ENCODE measurements at regions of chr17 and their contacts with region 1.

Region 1: DNA sequence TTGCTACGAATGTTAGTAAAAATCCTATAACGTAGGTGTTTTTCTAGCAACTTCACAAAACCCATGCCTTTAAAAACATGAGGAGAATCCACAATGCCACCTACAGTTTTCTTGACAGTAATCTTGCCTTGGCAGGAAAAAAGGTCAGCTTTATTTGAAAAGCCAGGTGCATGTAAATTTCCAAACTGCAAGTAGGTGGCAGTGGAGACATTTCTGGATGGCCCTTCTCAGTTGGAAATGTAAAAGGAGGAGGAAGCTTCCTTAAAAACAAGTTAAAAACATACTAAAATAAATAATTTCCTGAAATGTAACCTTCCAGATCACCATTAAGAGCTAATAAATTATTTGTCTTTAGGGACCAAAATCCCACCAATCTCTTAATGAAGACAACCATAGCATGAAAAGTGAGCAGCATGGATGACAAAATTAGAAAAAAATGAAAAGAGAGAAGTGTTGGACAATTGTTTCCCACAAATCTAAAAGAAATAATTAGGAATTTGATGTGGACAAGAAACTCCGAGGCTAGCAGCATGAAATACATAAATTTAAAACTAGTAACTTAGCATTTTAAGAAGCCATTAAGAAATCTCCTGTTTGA is 152.2 kb downstream of the SNX11 start:
- H3K4me3 ChIP-seq: no peak overlapping the region
- H3K27ac ChIP-seq: no peak overlapping the region
- H3K4me1 ChIP-seq: peaks cover 6% of the 10 kb centered on the region
- CTCF ChIP-seq: peak; percentile 85

Region 2: DNA sequence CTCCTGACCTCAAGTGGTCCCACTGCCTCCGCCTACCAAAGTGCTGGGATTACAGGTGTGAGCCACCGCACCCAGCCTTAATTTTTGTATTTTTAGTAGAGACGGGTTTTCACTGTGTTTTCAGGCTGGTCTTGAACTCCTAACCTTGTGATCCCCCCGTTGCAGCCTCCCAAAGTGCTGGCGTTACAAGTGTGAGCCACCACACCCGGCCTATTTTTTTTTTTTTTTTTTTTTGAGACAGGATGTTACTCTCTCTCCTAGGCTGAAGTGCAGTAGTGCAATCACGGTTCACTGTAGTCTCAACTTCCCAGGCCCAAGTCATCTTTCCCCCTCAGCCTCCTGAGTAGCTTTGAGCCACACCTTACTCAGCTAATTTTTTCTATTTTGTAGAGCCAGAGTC is 155.4 kb before region 1 on chr17:
- CTCF ChIA-PET with region 1: no interaction called
- POLR2A ChIA-PET with region 1: no interaction called
- H3K4me3 ChIP-seq: no peak overlapping the region
- H3K27ac ChIP-seq: no peak overlapping the region
- H3K4me1 ChIP-seq: peaks cover 3% of the 10 kb centered on the region; the same call in 1 of the 2 replicates
- CTCF ChIP-seq: no peak

Region 3: GRCh38 chr17:48181653-48182052 is 78.1 kb before region 1 on chr17:
- CTCF ChIA-PET with region 1: interaction called, 19 read pairs
- POLR2A ChIA-PET with region 1: no interaction called
- H3K4me3 ChIP-seq: no peak overlapping the region
- H3K27ac ChIP-seq: no peak overlapping the region
- H3K4me1 ChIP-seq: no peaks in the 10 kb centered on the region
- CTCF ChIP-seq: peak; percentile 75

Region 4: GRCh38 chr17:48241131-48241591 is 18.6 kb before region 1 on chr17:
- CTCF ChIA-PET with region 1: interaction called, 269 read pairs
- POLR2A ChIA-PET with region 1: interaction called, 3 read pairs
- H3K4me3 ChIP-seq: no peak overlapping the region
- H3K27ac ChIP-seq: peak overlapping the region; percentile 71; the same call in 1 of the 2 replicates
- H3K4me1 ChIP-seq: peaks cover 65% of the 10 kb centered on the region
- CTCF ChIP-seq: no peak

Region 5: DNA sequence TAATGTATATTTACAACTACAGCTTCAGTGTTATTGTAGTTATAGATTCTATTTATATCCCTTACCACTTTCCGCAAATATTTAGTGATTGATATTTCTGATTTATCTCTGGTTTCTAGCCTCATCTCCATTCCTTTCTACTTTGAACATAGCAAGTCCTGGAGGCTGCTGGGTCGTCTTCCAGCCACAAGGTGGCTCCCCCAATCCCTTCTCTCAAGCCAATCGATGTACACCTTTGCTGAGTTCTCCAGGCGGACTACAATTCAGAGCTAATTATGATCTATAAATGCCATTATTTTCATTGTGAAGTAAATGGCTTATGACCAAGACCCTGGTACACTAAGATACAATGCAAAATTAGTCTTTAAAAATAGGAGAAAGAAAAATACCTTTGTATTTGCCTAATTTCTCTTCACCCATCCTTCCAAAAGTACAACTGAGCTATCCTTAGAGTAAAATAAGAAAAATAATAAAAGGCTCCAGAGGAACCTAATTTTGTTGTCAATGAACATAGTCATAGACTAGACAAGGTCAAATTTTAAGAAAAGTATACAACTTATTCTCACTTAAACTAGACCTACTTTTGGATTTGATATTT is 48.1 kb after region 1 on chr17:
- CTCF ChIA-PET with region 1: interaction called, 76 read pairs
- POLR2A ChIA-PET with region 1: no interaction called
- H3K4me3 ChIP-seq: no peak overlapping the region
- H3K27ac ChIP-seq: no peak overlapping the region
- H3K4me1 ChIP-seq: peaks cover 6% of the 10 kb centered on the region
- CTCF ChIP-seq: peak; percentile 47; the same call in 1 of the 2 replicates

Region 6: DNA sequence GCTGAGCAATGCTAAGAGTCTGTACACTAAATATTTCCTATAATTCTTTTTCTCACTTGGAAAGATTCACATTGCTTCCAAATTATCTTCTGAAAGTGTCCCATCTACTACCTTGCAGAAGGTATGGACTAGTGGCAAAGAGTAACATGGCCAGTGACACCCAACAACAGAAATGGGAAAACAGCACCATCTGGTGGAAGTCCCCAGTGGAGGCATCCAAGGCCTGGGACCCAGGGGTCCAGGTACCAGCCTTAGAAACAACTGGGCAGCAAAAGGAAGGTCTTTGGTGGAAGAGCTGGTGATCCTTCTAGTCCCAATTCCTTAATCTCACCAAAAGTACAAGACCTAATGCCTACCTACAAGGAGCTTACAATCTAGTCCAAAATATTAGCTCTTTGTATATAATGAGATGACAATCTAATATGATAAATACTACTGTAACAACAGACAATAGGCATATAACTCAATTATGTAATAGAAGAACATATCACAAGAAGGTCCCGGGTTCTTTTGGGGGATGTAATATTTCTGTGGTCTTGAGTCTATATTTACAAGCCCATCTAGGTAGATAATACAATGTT is 114.9 kb after region 1 on chr17:
- CTCF ChIA-PET with region 1: interaction called, 109 read pairs
- POLR2A ChIA-PET with region 1: no interaction called
- H3K4me3 ChIP-seq: no peak overlapping the region
- H3K27ac ChIP-seq: no peak overlapping the region
- H3K4me1 ChIP-seq: no peaks in the 10 kb centered on the region
- CTCF ChIP-seq: no peak

Region 7: GRCh38 chr17:48618256-48618897 is 358.6 kb after region 1 on chr17:
- CTCF ChIA-PET with region 1: interaction called, 86 read pairs
- POLR2A ChIA-PET with region 1: no interaction called
- H3K4me3 ChIP-seq: no peak overlapping the region
- H3K27ac ChIP-seq: peak overlapping the region; percentile 44; the same call in 1 of the 2 replicates
- H3K4me1 ChIP-seq: peaks cover 48% of the 10 kb centered on the region
- CTCF ChIP-seq: peak; percentile 96

Measured in HEK293 (cell line).